ENCODE measurements at regions of chr5 and their contacts with region 1.

Region 1: DNA sequence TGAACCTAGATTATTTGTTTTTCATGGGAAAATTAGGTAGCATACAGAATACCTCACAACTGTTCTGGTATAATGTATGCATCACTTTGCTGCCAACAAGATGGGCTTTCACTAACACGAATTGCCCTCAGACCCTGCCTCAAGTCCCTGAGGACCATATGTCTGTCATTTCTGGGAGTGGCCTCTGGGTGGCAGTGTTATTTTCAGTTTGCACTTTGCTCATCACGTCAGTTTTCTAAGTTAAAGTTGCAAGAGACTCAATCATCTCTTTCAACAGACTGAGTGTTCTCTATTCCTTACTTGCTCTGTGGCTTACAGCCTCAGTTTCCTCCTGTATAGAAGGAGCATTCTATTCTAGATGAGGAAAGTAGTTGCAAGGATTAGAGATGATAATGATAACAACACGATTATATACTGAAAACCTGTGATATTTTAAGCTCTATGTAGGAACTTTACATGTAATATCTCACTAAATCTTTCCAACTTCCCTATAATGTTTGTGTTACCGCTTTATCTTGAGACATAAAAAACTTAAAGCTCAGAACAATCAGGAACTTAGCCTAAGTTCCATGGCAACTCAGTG is 55.7 kb downstream of the TSSK1B start:
- DNase-seq: peak in 1 of 2 donors; percentile 70
- H3K4me3 ChIP-seq: no peak overlapping the region
- H3K27ac ChIP-seq: no peak overlapping the region
- H3K4me1 ChIP-seq: no peaks in the 10 kb centered on the region
- H3K27me3 ChIP-seq: no peaks in the 10 kb centered on the region
- CTCF ChIP-seq: peak; percentile 46 to 74 (median 52)

Region 2: GRCh38 chr5:112995764-112996618 is 383.1 kb before region 1 on chr5:
- intact Hi-C with region 1: loop called (anchors 5 kb)
- DNase-seq: peak in 1 of 2 donors; percentile 85
- H3K4me3 ChIP-seq: no peak overlapping the region
- H3K27ac ChIP-seq: no peak overlapping the region
- H3K4me1 ChIP-seq: peaks cover 0 to 4% of the 10 kb centered on the region in 2 donors
- H3K27me3 ChIP-seq: no peaks in the 10 kb centered on the region
- CTCF ChIP-seq: peak; percentile 63 to 92 (median 90)

Region 3: DNA sequence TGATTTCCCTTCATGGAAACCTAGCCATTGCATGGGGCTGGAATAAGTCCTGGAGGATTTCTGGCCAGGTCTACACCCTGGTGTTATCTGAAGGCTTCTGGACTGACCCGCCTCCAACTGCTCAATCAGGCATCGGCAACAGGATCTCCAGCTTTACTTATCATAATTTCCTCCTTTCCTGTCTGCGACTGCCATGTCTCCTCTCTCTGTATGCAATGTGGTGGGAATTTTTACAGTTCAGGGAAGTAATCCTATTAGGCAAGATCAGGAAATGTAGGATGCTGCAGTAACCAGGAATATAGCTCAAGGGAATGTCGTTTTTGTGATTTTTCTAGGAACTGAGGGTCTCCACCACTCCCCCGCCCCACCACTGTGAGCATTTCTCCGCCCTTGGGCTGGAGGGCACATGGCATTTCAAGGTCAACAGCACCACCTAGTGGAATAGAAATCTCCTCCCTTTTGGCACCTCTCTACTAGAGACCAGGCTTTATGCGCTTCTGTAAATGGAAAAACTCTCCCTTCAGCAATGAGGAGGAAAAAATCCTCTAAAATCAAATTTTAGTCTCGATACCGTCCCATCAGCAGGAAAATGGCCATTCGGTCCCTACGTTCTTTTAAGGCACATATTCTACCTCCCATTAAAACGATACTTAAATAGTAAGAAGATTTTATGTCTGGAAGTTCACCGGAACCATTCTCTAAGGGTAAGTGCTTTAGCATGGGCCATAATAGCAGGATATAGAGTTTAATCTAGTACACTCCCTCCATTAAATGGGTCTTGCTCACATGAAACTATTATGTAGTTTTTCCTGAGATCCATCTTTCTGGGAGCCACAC is 227.5 kb after region 1 on chr5:
- intact Hi-C with region 1: loop called (anchors 2 kb)
- DNase-seq: no peak
- H3K4me3 ChIP-seq: no peak overlapping the region
- H3K27ac ChIP-seq: no peak overlapping the region
- H3K4me1 ChIP-seq: no peaks in the 10 kb centered on the region
- H3K27me3 ChIP-seq: no peaks in the 10 kb centered on the region
- CTCF ChIP-seq: peak; percentile 45 to 76 (median 65)